ENCODE measurements at regions of chr14 and their contacts with region 1.

Region 1: DNA sequence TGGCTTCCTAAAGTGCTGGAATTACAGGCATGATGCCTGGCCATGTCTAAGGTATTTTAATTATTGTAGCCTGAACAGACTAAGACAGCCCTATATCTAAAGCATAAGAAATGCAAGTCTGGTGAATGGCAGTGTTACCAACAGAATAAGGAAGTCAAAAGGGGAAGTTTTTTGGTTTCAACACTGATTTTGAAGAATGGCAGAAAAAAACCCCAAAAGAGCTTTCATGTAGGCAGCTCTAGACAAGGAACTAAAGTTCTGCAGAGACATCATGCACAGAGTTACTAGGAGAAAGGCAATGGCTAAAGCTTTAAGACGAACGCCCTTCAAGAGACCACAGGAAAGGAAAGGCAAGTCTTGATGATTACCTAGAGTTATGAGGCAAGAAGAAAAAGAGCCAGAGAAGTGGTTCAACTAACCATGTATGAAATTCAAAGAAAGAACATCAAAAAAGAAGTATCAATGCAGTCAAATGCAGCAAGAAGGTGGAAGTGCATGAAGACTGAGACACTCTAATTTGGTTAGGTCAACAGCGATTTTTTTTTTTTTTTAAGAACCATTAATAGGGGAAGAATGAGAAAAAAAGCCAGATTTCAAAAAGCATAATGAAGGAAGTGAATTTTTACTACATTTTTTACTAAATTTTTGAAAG is 50.8 kb downstream of the RPS6KA5 start:
- DNase-seq: peak; percentile 11
- H3K4me3 Mint-ChIP-seq: peak overlapping the region; percentile 42
- H3K27ac Mint-ChIP-seq: peak overlapping the region; percentile 70
- H3K4me1 Mint-ChIP-seq: peaks cover 46% of the 10 kb centered on the region
- H3K27me3 Mint-ChIP-seq: no peaks in the 10 kb centered on the region

Region 2: DNA sequence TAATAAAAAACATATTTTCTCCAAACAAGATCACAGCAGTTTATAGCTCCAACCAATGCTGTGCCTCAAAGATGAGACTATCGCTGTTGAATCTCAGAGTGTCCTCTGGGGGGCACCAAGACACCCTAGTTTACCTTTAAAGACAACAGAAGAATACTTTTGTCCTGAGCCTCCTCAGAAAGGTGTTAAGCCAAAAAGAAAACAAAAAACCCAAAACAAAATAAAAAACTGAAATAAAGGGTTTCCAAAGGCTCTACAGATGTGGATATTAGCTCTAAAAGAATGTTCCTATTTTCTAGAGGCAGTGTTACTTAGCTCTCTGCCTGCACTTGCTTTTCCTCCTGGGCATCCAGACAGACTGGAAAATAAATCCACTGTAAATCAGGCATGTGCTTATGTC is 106.5 kb before region 1 on chr14:
- intact Hi-C with region 1: loop called (anchors 5 kb)
- DNase-seq: peak; percentile 33
- H3K4me3 Mint-ChIP-seq: no peak overlapping the region
- H3K27ac Mint-ChIP-seq: no peak overlapping the region
- H3K4me1 Mint-ChIP-seq: peaks cover 35% of the 10 kb centered on the region
- H3K27me3 Mint-ChIP-seq: no peaks in the 10 kb centered on the region

Region 3: DNA sequence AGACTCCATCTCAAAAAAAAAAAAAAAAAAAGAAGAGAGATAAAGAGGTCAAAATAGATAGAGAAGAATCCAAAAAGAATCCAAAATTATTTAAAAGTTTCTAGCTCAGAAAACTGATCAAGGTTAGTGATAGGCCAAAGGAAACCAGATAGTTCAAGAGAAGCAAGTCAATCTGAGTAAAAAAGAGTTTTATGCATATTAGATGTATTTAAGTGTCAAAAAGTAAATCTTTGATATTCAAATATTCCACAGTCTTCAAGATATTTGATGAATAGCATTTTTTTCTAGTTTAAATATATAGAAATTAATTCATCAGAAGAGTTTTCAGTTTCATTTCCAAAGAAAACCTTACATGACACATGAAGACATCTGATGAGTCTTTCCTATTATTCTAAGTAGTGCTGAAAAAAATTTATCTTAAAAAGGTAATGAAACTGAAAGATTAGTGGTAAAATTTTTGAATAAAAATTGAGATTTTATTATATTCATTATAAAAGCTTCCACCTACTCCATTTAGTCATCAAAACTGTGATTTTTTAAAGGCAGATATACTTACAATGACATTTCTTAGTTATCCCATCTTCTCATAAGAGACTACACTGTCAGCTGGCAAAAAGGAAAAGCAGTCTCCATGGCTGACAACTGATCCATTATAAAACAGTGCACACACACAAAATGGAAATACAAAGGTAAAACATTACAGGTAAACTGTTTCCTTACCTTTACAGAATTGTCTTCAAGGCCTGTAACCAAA is 17.8 kb before region 1 on chr14:
- intact Hi-C with region 1: loop called (anchors 2 kb)
- DNase-seq: no peak
- H3K4me3 Mint-ChIP-seq: no peak overlapping the region
- H3K27ac Mint-ChIP-seq: no peak overlapping the region
- H3K4me1 Mint-ChIP-seq: peaks cover 56% of the 10 kb centered on the region
- H3K27me3 Mint-ChIP-seq: no peaks in the 10 kb centered on the region

Region 4: GRCh38 chr14:90999299-90999698 is 10.3 kb before region 1 on chr14:
- intact Hi-C with region 1: loop called (anchors 1 kb)
- DNase-seq: no peak
- H3K4me3 Mint-ChIP-seq: no peak overlapping the region
- H3K27ac Mint-ChIP-seq: no peak overlapping the region
- H3K4me1 Mint-ChIP-seq: peaks cover 26% of the 10 kb centered on the region
- H3K27me3 Mint-ChIP-seq: no peaks in the 10 kb centered on the region

Region 5: GRCh38 chr14:91021991-91022621 is 12.5 kb after region 1 on chr14:
- intact Hi-C with region 1: loop called (anchors 1 kb)
- DNase-seq: no peak
- H3K4me3 Mint-ChIP-seq: peak overlapping the region; percentile 76
- H3K27ac Mint-ChIP-seq: peak overlapping the region; percentile 94
- H3K4me1 Mint-ChIP-seq: peaks cover 83% of the 10 kb centered on the region
- H3K27me3 Mint-ChIP-seq: no peaks in the 10 kb centered on the region

Region 6: GRCh38 chr14:91303091-91303923 is 293.7 kb after region 1 on chr14:
- intact Hi-C with region 1: no loop called
- DNase-seq: peak; percentile 36
- H3K4me3 Mint-ChIP-seq: peak overlapping the region; percentile 63
- H3K27ac Mint-ChIP-seq: peak overlapping the region; percentile 98
- H3K4me1 Mint-ChIP-seq: peaks cover 72% of the 10 kb centered on the region
- H3K27me3 Mint-ChIP-seq: no peaks in the 10 kb centered on the region